ENCODE measurements at regions of chr6 and their contacts with region 1.

Region 1: DNA sequence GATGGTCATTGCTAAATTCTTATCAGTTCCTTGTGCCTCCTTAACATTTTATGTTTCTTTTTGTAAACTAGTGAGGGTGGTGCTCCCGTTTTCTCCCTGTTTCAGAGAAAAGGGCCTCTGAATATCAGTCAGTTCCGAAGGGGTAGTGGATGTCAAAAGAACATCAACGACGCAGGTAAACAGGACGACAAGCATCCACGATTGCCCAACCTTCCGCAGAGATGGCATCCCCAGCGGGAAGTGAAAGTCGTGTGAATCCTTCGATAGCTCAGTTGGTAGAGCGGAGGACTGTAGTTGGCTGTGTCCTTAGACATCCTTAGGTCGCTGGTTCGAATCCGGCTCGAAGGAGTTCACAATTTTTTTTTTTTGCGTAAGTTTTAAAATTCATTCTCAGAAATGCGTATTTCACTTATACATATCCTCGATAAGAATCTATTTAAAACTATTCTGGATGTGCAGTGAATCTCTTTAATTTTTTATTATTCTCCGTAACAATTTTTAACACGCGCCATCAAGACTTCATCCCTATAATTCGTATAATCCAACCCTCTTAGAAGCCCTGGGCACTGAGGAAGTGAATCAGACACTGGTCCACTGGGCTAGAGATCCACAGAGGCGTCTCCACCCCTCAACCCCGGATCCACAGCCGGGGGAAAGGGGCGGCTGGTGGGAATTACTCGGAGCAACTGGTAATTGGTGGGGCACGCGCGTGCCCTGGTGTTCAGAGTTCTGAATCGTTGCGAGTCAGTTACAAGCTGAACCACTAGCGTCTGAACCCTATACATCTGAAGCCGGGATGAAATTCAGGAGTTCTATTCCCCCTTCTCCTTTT is 27.9 kb upstream of the ABT1 start:
- DNase-seq: peak; percentile 75
- H3K4me3 ChIP-seq: peak overlapping the region; percentile 66 to 83
- H3K27ac ChIP-seq: peak overlapping the region in 1 of 2 experiments; percentile 34; a peak in 3 of 4 replicates
- H3K4me1 ChIP-seq: no peaks in the 10 kb centered on the region; a peak in 1 of 4 replicates
- H3K27me3 ChIP-seq: no peaks in the 10 kb centered on the region
- CTCF ChIP-seq: peak; percentile 41
- EP300 ChIP-seq: no peak
- RAD21 ChIP-seq: peak; percentile 57

Region 2: DNA sequence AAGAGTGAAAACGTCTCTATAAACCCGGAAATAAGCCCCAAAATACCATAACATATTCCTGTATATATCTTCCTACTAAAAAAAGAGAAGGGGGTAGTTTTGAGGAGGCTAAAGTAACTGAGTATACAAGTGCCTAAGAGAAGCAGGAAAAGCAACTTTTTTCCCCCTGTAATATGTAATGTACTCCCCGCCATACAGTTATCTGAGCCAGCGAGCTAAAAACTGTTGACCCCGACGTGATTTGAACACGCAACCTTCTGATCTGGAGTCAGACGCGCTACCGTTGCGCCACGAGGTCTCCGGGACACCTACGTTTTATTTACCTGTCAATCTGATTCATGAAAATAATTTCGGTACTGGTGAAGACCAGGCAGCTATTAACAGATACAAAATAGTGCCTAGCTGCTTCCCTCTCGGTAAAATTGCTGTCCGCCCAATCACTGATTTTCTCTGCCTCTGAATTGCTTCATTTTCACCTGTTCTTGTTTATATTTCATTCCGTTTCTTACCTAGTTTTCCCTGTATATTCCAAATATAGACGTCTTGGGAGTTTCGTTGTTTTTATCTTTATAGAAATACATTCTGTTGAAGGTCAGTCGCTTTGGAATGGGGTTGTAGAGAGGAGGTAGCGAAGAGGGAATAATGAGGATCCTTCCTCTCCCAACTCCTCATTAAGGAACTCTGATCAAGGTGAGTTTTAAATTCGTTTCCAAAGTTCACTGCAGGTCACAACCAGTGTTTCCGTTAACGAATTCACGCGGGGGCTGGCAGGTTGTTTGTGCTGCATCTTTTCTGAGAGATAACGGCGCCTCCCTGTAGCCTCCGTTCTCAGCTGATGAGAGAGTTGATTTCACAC is 237.4 kb before region 1 on chr6:
- CTCF ChIA-PET with region 1: interaction called, 13 read pairs
- POLR2A ChIA-PET with region 1: no interaction called
- DNase-seq: peak; percentile 9
- H3K4me3 ChIP-seq: peak overlapping the region; percentile 65 to 71
- H3K27ac ChIP-seq: no peak overlapping the region
- H3K4me1 ChIP-seq: peaks cover 2 to 7% of the 10 kb centered on the region in 2 experiments
- H3K27me3 ChIP-seq: no peaks in the 10 kb centered on the region
- CTCF ChIP-seq: no peak
- EP300 ChIP-seq: no peak
- RAD21 ChIP-seq: no peak

Region 3: GRCh38 chr6:26431258-26432172 is 137.3 kb before region 1 on chr6:
- CTCF ChIA-PET with region 1: no interaction called
- POLR2A ChIA-PET with region 1: no interaction called
- DNase-seq: no peak
- H3K4me3 ChIP-seq: no peak overlapping the region
- H3K27ac ChIP-seq: no peak overlapping the region
- H3K4me1 ChIP-seq: no peaks in the 10 kb centered on the region; a peak in 1 of 4 replicates
- H3K27me3 ChIP-seq: no peaks in the 10 kb centered on the region
- CTCF ChIP-seq: no peak
- EP300 ChIP-seq: no peak
- RAD21 ChIP-seq: no peak